Mammary epithelial cell (primary cell): ENCODE measurements at regions of chr1 and their contacts with region 1.

Region 1: DNA sequence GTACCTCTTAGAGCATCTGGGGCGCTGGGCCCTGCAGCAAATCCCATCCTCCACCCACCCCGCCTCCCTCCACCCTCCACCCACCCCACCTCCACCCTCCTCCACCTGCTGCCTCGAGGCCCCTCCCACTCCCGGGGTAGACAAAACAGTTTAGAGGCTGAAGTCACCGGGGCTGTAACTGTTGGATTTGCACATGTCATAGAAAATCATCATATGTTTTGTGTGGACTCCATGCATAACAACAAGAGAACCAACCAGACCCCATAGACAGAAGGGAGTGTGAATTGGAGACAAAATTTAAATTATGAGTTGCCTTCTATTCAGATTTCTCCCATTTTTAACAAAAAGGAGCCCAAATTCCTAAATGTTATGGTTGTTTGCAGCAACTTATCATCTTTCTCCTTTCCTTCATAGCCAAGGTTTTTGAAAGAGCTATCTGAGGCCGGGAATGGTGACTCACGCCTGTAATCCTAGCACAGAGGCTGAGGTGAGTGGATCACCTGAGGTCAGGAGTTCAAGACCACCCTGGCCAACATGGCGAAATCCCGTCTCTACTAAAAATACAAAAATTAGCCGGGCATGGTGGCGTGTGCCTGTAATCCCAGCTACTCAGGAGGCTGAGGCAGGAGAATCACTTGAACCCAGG is 28.2 kb upstream of the LGALS8 start:
- DNase-seq: no peak
- H3K4me3 ChIP-seq: no peak overlapping the region
- H3K27ac ChIP-seq: no peak overlapping the region
- H3K4me1 ChIP-seq: no peaks in the 10 kb centered on the region
- H3K27me3 ChIP-seq: no peaks in the 10 kb centered on the region
- CTCF ChIP-seq: no peak

Region 2: GRCh38 chr1:236269439-236269838 is 226.2 kb before region 1 on chr1:
- CTCF ChIA-PET with region 1: no interaction called
- dilution Hi-C with region 1: no loop called
- in situ Hi-C with region 1: no loop called
- intact Hi-C with region 1: no loop called
- DNase-seq: no peak
- H3K4me3 ChIP-seq: no peak overlapping the region
- H3K27ac ChIP-seq: no peak overlapping the region
- H3K4me1 ChIP-seq: no peaks in the 10 kb centered on the region
- H3K27me3 ChIP-seq: no peaks in the 10 kb centered on the region
- CTCF ChIP-seq: no peak

Region 3: DNA sequence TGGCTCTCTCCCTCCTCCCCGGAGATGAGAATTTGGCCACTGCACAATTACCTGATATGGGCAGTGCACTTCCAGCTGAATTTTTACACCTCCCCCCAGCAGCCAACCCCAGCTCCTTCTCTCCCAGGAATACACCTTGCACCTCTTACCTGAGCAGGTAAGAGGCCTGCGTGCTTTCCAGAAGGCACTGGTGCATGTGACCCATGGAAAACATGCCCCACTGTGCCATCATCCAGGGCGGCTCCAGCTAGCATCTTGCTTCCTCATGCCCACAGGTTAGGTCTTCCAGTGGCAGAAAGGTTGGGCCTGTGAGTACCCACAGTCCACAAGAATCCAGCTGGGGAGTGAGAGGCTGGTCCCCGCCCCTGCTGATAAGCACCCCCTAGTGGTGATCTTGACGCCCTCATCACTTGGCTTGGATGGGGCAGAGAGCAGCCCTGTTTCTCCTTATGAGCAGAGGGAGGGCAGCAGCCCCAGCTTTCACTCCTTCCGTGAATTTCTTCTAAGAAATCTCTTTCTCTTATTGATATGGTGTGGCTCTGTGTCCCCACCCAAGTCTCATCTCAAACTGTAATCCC is 43.7 kb before region 1 on chr1:
- CTCF ChIA-PET with region 1: no interaction called
- dilution Hi-C with region 1: loop called (anchors 5 kb)
- in situ Hi-C with region 1: no loop called
- intact Hi-C with region 1: no loop called
- DNase-seq: peak; percentile 6
- H3K4me3 ChIP-seq: no peak overlapping the region
- H3K27ac ChIP-seq: no peak overlapping the region
- H3K4me1 ChIP-seq: peaks cover 2% of the 10 kb centered on the region
- H3K27me3 ChIP-seq: no peaks in the 10 kb centered on the region
- CTCF ChIP-seq: peak; percentile 34 to 54

Region 4: DNA sequence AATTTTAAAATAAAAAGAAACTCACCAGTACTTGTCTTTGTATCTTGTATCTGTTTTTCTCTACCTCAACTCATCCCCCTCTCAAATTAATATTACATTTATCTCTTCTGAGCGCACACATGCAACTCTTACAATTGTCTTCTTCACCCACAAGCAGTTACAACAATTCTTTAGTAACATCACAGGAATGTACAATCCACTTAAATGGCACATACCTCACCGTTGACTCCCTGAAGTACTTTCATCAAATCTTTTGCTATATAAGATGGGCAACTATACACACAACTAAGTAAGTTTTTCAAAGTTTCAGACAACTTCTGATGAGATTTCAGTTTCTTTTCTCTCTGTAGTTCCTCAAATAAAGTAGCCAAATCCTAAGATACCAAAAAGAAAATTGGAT is 80.4 kb after region 1 on chr1:
- CTCF ChIA-PET with region 1: no interaction called
- dilution Hi-C with region 1: no loop called
- in situ Hi-C with region 1: no loop called
- intact Hi-C with region 1: no loop called
- DNase-seq: peak; percentile 0
- H3K4me3 ChIP-seq: no peak overlapping the region
- H3K27ac ChIP-seq: no peak overlapping the region
- H3K4me1 ChIP-seq: no peaks in the 10 kb centered on the region
- H3K27me3 ChIP-seq: no peaks in the 10 kb centered on the region
- CTCF ChIP-seq: no peak